ENCODE measurements at regions of chr1 and their contacts with region 1.

Region 1: GRCh38 chr1:47444562-47445465 is 7.0 kb downstream of the FOXD2 start:
- DNase-seq: peak; percentile 26
- ATAC-seq: peak; percentile 61
- H3K4me3 Mint-ChIP-seq: peak overlapping the region; percentile 43
- H3K27ac Mint-ChIP-seq: no peak overlapping the region
- H3K4me1 Mint-ChIP-seq: peaks cover 18% of the 10 kb centered on the region
- H3K27me3 Mint-ChIP-seq: peaks cover 61% of the 10 kb centered on the region
- CTCF ChIP-seq: no peak

Region 2: DNA sequence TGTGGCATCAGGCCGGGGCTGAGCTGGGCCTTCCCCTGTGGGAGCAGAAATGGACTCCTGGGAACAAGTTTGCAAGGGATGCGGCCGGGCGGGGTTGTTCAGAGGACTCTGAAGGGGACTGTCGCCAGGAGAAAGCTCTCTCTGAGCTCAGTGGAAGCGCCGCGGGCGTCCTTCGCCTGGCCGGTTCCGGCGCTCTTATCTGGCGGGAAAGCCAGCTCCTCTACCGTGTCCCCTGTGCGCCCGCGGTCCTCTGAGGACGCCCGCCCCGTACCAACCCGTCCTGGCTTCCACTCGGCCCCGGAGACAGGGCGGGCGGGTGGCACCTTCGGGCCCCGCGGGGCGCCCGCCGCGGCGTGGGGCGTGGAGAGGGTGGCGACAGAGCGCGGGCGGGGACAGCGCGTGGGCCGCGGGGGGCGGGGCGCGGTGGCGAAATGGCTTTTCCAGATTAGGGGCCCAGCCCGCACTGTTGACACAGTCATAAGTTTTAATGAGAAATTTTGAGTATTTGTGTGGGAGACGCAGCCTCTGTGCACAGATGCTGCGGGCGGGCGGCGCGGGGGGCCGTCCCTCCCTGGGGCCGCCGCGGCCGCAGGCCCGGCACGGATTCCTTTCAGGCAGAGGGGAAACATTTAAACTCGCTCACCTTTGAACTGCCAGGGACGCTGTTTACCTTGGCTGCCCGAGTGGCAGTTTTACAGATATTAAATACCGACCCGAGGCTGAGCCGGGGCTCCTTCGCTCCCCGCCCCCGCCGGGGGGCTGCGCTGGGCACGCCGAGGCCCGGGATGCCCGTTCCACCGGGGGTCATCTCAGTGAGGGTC is 63.3 kb after region 1 on chr1:
- CTCF ChIA-PET with region 1: no interaction called
- POLR2A ChIA-PET with region 1: no interaction called
- intact Hi-C with region 1: loop called (anchors 5 kb)
- DNase-seq: peak; percentile 66
- ATAC-seq: peak; percentile 82
- H3K4me3 Mint-ChIP-seq: peak overlapping the region; percentile 52
- H3K27ac Mint-ChIP-seq: no peak overlapping the region
- H3K4me1 Mint-ChIP-seq: peaks cover 11% of the 10 kb centered on the region
- H3K27me3 Mint-ChIP-seq: peaks cover 71% of the 10 kb centered on the region
- CTCF ChIP-seq: no peak